ENCODE measurements at regions of chr10 and their contacts with region 1.

Region 1: DNA sequence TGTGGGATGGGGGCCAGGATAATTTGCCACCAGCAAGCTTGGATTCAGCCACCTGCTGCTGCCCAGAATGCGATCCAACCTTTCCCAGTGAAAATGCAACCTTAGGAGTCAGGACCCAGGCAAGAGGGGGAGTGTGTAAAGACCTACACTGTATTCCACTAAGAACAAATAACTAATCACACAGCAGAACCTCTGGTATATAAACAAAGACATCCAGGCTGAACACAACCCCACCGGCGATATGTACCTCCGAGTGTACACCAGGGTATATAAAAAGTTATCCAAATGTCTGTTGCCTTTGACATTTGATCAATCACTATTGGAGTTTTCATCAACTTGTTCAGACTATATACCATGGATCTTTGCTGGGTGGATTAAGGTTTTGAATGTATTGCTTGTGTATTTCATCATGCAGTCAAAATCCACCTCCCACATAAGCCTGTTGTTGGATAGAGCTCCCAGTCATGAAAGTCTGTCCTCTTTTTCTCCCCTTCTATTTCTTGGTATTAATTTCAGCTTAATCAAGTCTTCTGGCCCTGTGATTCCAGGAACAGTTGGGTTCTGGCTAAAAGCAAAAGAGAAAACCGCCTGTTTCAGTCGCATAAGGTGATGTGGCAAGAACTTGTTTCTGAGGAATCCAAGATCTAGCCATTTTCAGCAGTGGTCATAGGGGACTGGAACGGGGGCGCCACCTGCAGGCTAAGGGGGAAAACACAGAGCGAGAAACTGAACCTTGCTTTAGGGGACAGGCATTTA is 290.7 kb downstream of the CCDC3 start:
- DNase-seq: peak; percentile 68 to 78 (median 75)
- ATAC-seq: peak; percentile 87 to 94 (median 89)
- H3K4me3 ChIP-seq: no peak overlapping the region
- H3K27ac ChIP-seq: peak overlapping the region in 1 of 3 donors; percentile 6
- H3K4me1 ChIP-seq: peaks cover 0 to 19% (median 0%) of the 10 kb centered on the region in 4 donors
- H3K27me3 ChIP-seq: no peaks in the 10 kb centered on the region
- CTCF ChIP-seq: peak; percentile 90 to 94 (median 93)
- POLR2A ChIP-seq: no peak

Region 2: GRCh38 chr10:12264204-12264940 is 446.4 kb before region 1 on chr10:
- intact Hi-C with region 1: loop called in 1 of 2 experiments (anchors 10 kb)
- DNase-seq: peak; percentile 83 to 87 (median 85)
- ATAC-seq: peak; percentile 86 to 94 (median 90)
- H3K4me3 ChIP-seq: peak overlapping the region; percentile 22 to 46 (median 30)
- H3K27ac ChIP-seq: peak overlapping the region in 1 of 3 donors; percentile 31
- H3K4me1 ChIP-seq: peaks cover 0 to 19% (median 10%) of the 10 kb centered on the region in 4 donors
- H3K27me3 ChIP-seq: no peaks in the 10 kb centered on the region
- CTCF ChIP-seq: peak; percentile 84 to 93 (median 87)
- POLR2A ChIP-seq: no peak

Region 3: DNA sequence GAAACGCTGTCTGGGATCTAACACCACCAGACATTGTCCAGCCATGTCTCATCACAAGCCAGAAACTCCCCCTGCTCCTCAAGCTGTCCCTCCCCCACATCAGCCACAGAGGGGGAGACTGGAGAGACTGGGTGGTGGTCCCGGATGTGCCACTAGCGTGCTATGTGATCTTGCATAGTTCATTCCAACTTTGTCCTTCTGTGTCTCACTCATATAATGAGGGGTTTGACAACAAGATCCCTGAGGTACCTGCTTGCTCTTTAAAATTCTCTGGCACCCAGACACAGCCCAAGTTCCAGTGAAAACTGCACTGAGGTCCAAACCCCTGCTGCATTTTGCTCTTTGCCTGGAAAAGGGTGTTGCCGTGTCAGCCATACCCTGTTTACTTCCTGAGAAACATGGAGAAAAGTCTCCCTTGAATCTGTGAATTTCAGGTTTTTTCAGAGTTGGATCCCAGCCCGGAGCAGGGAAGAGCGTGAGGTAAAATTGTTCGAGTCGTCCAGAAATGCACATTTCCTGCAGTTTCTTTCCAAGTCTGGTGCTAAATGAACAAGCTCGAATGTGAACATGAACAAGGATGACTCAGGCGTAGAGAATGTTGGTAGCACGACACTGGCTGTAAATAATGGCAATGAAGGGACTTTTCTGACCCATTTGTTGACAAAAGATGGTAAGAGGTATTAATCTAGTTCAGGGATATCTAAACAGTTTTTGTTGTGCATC is 134.2 kb after region 1 on chr10:
- intact Hi-C with region 1: no loop called
- DNase-seq: no peak
- ATAC-seq: peak; percentile 42 to 81 (median 54)
- H3K4me3 ChIP-seq: no peak overlapping the region
- H3K27ac ChIP-seq: peak overlapping the region in 2 of 3 donors; percentile 2 to 47
- H3K4me1 ChIP-seq: peaks cover 0 to 8% (median under 1%) of the 10 kb centered on the region in 4 donors
- H3K27me3 ChIP-seq: no peaks in the 10 kb centered on the region
- CTCF ChIP-seq: no peak
- POLR2A ChIP-seq: no peak

Region 4: GRCh38 chr10:13201132-13201531 is 490.4 kb after region 1 on chr10:
- intact Hi-C with region 1: no loop called
- DNase-seq: no peak
- ATAC-seq: no peak
- H3K4me3 ChIP-seq: no peak overlapping the region
- H3K27ac ChIP-seq: no peak overlapping the region
- H3K4me1 ChIP-seq: no peaks in the 10 kb centered on the region
- H3K27me3 ChIP-seq: no peaks in the 10 kb centered on the region
- CTCF ChIP-seq: no peak
- POLR2A ChIP-seq: no peak